ENCODE measurements at regions of chr1 and their contacts with region 1.

Region 1: DNA sequence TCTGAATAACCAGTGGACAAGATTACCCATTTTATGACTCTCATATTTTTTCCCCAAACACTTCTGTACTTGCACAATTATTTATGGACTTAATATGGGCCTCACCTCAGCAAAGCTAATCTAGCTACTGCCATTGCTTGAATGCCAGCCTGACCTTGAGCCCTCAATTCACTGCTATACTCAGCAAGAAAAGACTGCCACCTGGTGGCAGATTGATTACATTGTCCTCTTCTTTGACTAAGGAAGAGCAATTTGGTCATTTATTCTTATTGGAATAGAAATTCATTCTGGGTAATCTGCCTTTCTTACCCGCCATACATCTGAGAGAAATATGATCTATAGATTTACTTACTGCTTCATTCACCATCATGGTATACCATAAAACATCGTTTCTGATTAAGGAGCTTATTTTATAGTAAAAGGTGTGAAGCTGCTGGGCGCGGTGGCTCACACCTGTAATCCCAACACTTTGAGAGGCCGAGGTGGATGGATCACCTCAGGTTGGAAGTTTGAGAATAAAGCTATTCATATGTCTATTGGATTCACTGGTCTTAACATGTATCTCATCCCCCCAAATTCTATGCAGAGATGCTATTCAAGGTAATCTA is 32.9 kb upstream of the DIPK1A start:
- DNase-seq: peak; percentile 78 to 84 (median 80)
- H3K4me3 ChIP-seq: no peak overlapping the region
- H3K4me3 Mint-ChIP-seq: peak overlapping the region in 1 of 8 donors; percentile 80
- H3K27ac ChIP-seq: no peak overlapping the region
- H3K27ac Mint-ChIP-seq: peak overlapping the region; percentile 52 to 88 (median 77)
- H3K4me1 ChIP-seq: peaks cover 49% of the 10 kb centered on the region
- H3K4me1 Mint-ChIP-seq: peaks cover 36 to 50% (median 42%) of the 10 kb centered on the region in 4 donors
- H3K27me3 ChIP-seq: no peaks in the 10 kb centered on the region
- H3K27me3 Mint-ChIP-seq: no peaks in the 10 kb centered on the region

Region 2: DNA sequence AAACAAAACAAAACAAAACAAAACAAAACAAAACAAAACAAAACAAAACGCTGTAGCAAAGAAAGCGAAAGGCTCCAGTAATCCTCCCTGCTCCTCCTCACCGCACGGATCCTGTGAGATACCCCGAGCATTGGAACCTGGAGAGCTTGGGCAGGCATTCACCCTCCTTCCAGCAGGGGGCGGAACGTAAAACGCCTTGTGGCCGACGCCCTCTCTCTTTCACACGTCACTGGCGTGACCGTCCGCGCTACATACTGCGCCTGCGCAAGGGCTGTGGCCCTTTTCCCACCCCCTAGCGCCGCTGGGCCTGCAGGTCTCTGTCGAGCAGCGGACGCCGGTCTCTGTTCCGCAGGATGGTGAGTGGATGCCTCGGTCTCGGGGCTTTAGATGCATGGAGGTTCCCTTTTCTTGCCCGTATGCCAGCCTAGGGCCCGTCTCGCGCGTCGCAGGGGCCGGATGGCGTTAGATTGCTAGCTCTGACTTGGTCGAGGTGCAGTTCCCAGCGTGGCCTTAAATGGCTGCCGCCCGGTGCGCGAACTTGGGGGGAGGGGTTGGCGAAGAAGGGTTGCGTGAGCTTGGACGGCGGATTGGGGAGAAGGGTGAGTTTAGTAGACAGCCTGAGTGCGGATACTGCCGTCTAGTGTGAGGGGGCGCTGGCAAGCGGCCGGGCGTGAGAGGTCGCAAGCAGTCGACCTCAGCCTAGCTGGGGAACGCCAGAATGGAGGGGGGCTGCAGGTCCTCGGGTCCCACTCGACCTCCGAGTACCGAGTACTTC is 162.3 kb before region 1 on chr1 and contains the start of gene RPL5:
- CTCF ChIA-PET with region 1: interaction called, 10 read pairs
- POLR2A ChIA-PET with region 1: interaction called, 7 read pairs
- intact Hi-C with region 1: no loop called
- DNase-seq: peak; percentile 97 to 100 (median 98)
- H3K4me3 ChIP-seq: peak within 1 kb of the TSS; percentile 54 to 100
- H3K4me3 Mint-ChIP-seq: peak within 1 kb of the TSS; percentile 98 to 100 (median 100)
- H3K27ac ChIP-seq: peak within 1 kb of the TSS; percentile 93
- H3K27ac Mint-ChIP-seq: peak within 1 kb of the TSS; percentile 98 to 100 (median 99)
- H3K4me1 ChIP-seq: peaks cover 46% of the 10 kb centered on the region
- H3K4me1 Mint-ChIP-seq: peaks cover 35 to 55% (median 45%) of the 10 kb centered on the region in 4 donors
- H3K27me3 ChIP-seq: no peaks in the 10 kb centered on the region
- H3K27me3 Mint-ChIP-seq: peaks cover 0 to 1% of the 10 kb centered on the region in 2 donors
- total RNA-seq, gene RPL5: 1,501 to 1,588 TPM

Region 3: GRCh38 chr1:92877792-92878191 is 116.4 kb before region 1 on chr1:
- CTCF ChIA-PET with region 1: interaction called, 33 read pairs
- POLR2A ChIA-PET with region 1: interaction called, 3 read pairs
- intact Hi-C with region 1: no loop called
- DNase-seq: no peak
- H3K4me3 ChIP-seq: no peak overlapping the region
- H3K4me3 Mint-ChIP-seq: peak overlapping the region in 7 of 8 donors; percentile 3 to 83 (median 63)
- H3K27ac ChIP-seq: no peak overlapping the region
- H3K27ac Mint-ChIP-seq: peak overlapping the region; percentile 9 to 93 (median 52)
- H3K4me1 ChIP-seq: peaks cover 42% of the 10 kb centered on the region
- H3K4me1 Mint-ChIP-seq: peaks cover 22 to 32% (median 28%) of the 10 kb centered on the region in 4 donors
- H3K27me3 ChIP-seq: no peaks in the 10 kb centered on the region
- H3K27me3 Mint-ChIP-seq: no peaks in the 10 kb centered on the region

Region 4: DNA sequence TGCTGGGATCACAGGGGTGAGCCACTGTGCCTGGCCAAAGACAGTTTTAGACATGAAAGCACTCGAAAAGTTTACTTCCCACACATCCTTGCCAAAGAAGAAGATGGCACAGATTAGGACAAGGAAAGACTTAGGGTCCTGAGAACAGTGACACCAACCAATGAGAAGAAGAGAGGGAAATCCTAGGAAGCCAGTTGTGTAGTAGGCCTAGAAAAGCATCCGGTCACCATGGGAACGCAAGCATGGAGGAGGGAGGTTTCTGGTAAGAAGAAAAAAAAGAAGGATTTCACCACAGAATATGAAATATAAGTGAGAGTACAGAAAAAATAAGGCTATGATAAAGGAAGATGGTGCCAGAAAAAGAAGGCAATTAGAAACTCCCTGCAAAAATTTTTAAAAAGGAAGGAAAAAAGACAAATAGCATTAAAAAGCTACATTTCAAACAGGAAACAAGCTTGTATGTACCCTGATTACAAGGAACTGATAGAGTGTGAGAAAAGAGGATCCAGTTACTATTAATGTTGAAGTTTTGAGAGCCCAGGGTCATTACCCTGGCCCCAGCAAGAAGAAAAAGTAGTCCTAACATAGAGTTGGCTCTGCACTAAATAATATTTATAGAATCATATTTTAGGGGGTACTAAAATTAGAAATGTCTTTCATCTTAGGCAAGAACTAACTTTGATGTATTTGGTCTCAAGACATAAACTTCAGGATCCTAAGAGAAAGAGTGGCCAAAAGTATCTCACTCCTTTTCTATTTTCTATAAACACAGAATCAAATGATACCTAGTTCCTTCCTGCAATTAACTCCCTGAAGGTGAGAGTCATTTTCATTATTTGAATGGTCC is 49.1 kb before region 1 on chr1:
- CTCF ChIA-PET with region 1: interaction called, 29 read pairs
- POLR2A ChIA-PET with region 1: interaction called, 6 read pairs
- intact Hi-C with region 1: no loop called
- DNase-seq: no peak
- H3K4me3 ChIP-seq: no peak overlapping the region
- H3K4me3 Mint-ChIP-seq: peak overlapping the region in 2 of 8 donors; percentile 4 to 17
- H3K27ac ChIP-seq: no peak overlapping the region
- H3K27ac Mint-ChIP-seq: peak overlapping the region in 2 of 7 donors; percentile 12 to 23
- H3K4me1 ChIP-seq: peaks cover 46% of the 10 kb centered on the region
- H3K4me1 Mint-ChIP-seq: peaks cover 39 to 56% (median 48%) of the 10 kb centered on the region in 4 donors
- H3K27me3 ChIP-seq: no peaks in the 10 kb centered on the region
- H3K27me3 Mint-ChIP-seq: no peaks in the 10 kb centered on the region

Region 5: DNA sequence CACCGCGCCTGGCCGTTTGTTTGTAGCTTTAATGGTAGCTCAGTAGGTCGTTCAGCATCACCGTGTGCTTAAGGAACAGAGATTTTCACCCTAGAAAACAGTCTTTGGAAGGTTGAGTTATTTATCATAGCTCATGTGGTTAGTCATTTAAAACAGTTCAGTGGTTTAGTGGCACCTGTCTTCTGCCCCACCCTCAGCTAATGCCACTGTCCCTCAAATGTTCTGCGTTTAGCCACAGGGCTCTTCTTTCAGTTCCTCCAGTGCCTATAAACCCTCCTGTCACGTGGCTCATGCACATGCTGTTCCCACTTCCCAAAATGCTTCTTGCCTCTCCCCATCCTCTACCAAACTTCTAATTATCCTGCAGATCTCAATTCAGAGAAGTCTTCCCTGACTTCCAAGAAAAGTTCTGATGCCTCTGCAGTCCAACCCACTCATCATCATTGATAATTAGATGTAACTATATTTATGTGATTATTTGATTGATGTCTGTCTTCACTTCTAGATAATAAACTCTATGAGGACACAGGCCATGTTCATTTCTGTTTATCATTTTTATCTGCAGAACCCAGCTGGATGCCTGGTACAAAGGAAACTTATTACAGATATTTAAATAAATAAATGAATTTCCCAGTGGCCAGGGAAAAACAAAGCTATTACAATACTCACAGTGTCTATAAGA is 18.5 kb before region 1 on chr1:
- CTCF ChIA-PET with region 1: interaction called, 433 read pairs
- POLR2A ChIA-PET with region 1: interaction called, 72 read pairs
- intact Hi-C with region 1: no loop called
- DNase-seq: no peak
- H3K4me3 ChIP-seq: no peak overlapping the region
- H3K4me3 Mint-ChIP-seq: peak overlapping the region in 7 of 8 donors; percentile 1 to 68 (median 56)
- H3K27ac ChIP-seq: no peak overlapping the region
- H3K27ac Mint-ChIP-seq: peak overlapping the region; percentile 10 to 93 (median 58)
- H3K4me1 ChIP-seq: peaks cover 80% of the 10 kb centered on the region
- H3K4me1 Mint-ChIP-seq: peaks cover 37 to 62% (median 48%) of the 10 kb centered on the region in 4 donors
- H3K27me3 ChIP-seq: no peaks in the 10 kb centered on the region
- H3K27me3 Mint-ChIP-seq: no peaks in the 10 kb centered on the region

Region 6: DNA sequence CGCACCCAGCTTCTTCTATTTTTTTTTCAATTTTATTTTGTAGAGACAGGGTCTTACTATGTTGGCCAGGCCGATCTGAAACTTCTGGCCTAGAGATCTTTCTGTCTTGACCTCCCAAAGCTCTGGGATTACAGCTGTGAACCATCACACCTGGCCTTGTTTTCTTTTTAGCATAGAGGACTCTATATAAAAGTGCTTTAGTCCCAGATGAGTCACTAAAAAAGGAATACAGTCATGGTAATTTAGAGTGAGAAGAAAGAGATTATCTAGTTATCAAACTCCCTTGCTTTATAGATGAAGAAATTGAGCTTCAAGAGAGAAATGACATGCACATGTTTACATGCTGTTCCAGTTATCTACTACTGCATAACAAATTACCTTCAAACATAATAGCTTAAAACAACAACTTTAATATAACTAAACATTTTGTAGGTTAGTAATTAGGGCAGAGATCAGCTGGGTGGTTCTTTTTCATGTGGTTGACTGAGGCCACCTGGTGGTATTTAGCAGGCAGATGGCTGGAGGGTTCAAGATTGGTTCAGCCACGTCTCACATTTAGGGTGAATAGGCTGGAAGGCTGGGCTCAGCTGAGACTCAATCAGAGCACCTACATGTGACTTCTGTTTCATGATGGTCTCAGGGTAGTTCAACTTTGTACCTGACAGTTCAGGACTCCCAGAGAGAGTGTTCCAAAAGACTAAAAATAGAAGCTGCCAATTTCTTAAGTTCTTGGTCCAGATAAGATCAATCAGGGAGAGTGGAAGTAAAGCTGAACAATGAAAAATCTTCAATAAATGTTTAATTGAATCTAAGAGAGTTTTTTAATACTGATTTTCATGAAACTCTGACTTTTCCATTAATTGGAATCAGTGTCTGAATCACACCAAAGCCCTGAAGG is 67.9 kb after region 1 on chr1:
- CTCF ChIA-PET with region 1: interaction called, 15 read pairs
- POLR2A ChIA-PET with region 1: no interaction called
- intact Hi-C with region 1: no loop called
- DNase-seq: peak; percentile 43 to 57 (median 49)
- H3K4me3 ChIP-seq: no peak overlapping the region
- H3K4me3 Mint-ChIP-seq: no peak overlapping the region
- H3K27ac ChIP-seq: no peak overlapping the region
- H3K27ac Mint-ChIP-seq: no peak overlapping the region
- H3K4me1 ChIP-seq: no peaks in the 10 kb centered on the region
- H3K4me1 Mint-ChIP-seq: peaks cover 0 to 5% (median 4%) of the 10 kb centered on the region in 4 donors
- H3K27me3 ChIP-seq: no peaks in the 10 kb centered on the region
- H3K27me3 Mint-ChIP-seq: peaks cover 12 to 20% of the 10 kb centered on the region in 2 donors

Region 7: DNA sequence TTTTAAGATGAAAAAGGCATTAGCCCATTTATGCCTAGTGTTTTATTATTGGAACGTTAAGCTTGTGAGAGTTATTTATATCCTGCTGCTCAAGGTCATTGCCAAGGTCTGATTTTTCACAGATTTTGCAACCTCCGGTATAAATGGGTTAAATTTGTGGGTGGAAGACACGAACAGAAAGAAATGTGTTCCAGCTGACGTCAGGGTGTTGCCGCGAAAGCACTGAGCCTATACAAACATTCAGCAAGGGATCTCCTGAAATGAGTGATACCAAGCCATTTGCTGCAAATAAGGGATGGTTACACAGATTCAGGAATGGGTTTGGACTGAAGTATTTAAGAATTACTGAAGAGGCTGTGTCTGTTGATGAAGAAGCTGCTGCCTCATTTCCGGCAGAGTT is 153.8 kb after region 1 on chr1:
- CTCF ChIA-PET with region 1: no interaction called
- POLR2A ChIA-PET with region 1: no interaction called
- intact Hi-C with region 1: no loop called
- DNase-seq: no peak
- H3K4me3 ChIP-seq: no peak overlapping the region
- H3K4me3 Mint-ChIP-seq: no peak overlapping the region
- H3K27ac ChIP-seq: no peak overlapping the region
- H3K27ac Mint-ChIP-seq: peak overlapping the region in 3 of 7 donors; percentile 11 to 26 (median 11)
- H3K4me1 ChIP-seq: no peaks in the 10 kb centered on the region
- H3K4me1 Mint-ChIP-seq: peaks cover 0 to 9% (median 5%) of the 10 kb centered on the region in 4 donors
- H3K27me3 ChIP-seq: no peaks in the 10 kb centered on the region
- H3K27me3 Mint-ChIP-seq: no peaks in the 10 kb centered on the region